Tibial artery (tissue), 4 donors: ENCODE measurements at regions of chr7 and their contacts with region 1.

Region 1: DNA sequence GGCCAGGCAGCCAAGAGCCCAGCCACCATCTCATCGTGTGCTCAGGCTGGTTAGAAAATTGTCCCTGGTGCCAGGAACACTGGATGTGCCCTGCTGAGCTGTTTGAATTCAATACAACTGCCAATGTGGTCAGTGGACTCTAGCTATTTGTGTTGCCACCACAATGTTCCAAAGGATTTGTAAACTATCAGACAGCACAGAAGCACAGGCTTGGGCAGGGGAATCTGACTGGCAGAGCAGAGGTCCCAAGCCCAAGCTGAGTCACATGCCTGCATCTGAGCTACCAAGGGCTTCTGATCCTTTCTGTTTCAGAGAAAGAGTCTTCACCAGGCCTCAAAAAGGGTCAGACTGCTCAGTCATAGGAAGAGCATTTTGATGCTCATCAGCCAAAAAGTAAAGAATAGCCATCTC is 232.1 kb upstream of the SEMA3C start:
- DNase-seq: no peak
- H3K4me3 ChIP-seq: no peak overlapping the region
- H3K27ac ChIP-seq: no peak overlapping the region
- H3K4me1 ChIP-seq: no peaks in the 10 kb centered on the region
- H3K27me3 ChIP-seq: no peaks in the 10 kb centered on the region
- CTCF ChIP-seq: no peak

Region 2: DNA sequence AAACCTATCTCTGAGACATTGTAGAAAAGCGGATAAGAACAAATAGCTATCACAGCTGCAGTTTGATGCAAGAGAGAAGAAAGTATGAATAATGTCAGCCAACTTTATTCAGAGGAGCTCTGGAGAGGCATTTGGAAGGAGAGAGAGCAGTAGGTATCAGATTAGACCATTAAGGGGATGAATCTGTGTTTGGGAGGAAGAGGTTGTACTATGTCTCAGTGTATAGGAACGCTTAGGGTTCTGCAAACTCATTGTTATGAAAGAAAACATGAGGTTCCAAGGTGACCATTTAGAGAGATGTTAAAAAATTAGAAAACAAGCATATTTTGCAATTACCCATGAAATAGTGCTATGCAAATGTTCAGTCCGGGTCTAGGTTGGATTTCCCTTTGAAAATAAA is 1223.8 kb before region 1 on chr7:
- intact Hi-C with region 1: loop called (anchors 5 kb)
- DNase-seq: no peak
- H3K4me3 ChIP-seq: no peak overlapping the region
- H3K27ac ChIP-seq: no peak overlapping the region
- H3K4me1 ChIP-seq: no peaks in the 10 kb centered on the region
- H3K27me3 ChIP-seq: no peaks in the 10 kb centered on the region
- CTCF ChIP-seq: no peak